PC-3 (cell line): ENCODE measurements at regions of chr6 and their contacts with region 1.

Region 1: DNA sequence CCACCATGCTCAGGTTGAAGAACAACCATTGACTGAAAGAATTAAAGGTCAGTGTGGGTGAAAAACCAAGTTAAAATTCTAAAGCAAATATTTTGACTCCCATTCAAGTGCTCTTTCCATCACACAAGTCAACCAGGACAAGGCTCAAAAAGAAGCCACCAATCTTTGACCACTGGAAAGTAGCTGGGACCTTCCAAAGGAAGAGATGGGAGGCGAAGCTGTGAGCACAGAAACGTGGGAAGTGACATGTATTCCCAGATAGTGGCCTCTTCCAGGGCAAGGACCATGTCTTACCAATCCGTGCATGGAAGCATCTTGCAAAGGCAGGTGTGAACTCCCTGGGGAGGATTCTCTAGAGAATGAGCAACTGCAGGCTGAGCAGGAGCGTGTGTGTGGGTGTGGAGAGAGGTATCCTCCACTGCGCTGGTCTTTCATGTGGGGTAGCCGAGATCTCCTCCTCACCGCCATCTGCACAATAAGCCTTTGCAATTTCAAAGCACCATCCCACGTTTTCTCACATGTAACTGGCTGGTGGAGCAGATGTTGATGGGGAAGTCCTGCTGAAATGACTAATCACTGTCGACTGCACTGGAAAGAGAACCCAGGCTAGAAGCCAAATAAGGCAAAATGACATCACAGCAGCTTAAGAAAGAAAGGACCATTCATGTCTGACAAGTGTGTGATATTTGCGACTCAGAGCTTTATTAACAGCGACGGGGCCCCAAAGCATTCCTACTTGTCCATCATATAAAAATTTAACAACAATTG is 189.4 kb upstream of the RREB1 start:
- DNase-seq: peak; percentile 75
- ATAC-seq: peak; percentile 45
- H3K4me3 ChIP-seq: no peak overlapping the region
- H3K27ac ChIP-seq: peak overlapping the region; percentile 73
- H3K4me1 ChIP-seq: peaks cover 42% of the 10 kb centered on the region
- H3K27me3 ChIP-seq: no peaks in the 10 kb centered on the region
- CTCF ChIP-seq: no peak

Region 2: GRCh38 chr6:6931071-6932025 is 12.9 kb after region 1 on chr6:
- CTCF ChIA-PET with region 1: no interaction called
- POLR2A ChIA-PET with region 1: no interaction called
- intact Hi-C with region 1: no loop called
- DNase-seq: no peak
- ATAC-seq: no peak
- H3K4me3 ChIP-seq: no peak overlapping the region
- H3K27ac ChIP-seq: no peak overlapping the region
- H3K4me1 ChIP-seq: no peaks in the 10 kb centered on the region
- H3K27me3 ChIP-seq: no peaks in the 10 kb centered on the region
- CTCF ChIP-seq: no peak

Region 3: DNA sequence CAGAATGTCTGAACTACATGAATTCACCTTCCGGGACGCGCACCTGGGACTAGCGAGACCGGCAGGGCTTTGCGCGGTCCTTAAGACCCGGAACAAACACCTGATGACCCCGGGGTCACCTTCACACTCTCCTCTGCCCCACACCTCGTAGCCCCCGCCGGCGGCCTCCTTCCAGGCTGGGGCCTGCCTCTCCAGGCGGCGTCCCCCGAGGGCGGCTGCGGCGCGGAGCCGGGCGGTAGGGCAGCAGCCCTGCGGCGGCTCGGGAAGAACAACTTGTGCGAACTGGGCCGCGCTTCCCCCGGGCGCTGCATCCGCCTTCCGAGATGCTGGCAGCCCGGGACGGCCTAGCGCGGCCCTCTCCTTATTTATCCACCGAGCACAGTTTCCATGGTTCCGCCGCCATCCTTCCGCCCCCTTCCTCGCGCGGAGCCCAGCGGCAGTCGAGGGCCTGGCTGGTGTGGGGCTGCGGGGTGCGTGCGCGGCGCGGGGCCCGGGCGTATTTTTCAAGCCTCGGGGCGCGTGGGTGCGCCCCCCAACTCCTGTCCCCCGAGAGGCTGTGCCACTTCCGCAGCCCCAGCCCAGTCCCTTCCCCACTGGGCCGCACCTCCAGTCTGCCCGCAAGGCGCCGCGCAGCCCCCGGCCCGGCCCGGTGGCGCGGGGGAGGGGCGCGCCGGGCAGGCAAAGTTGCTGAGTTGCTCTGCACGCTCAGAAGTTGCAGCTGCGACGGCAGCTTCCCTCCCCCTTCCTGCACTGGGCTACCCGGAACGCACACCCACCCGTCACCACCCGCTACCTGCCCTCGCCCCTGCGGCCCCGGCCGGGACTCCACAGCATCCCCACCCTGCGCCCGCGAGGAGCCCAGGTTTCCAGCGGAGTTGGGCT is 133.1 kb after region 1 on chr6:
- CTCF ChIA-PET with region 1: no interaction called
- POLR2A ChIA-PET with region 1: no interaction called
- intact Hi-C with region 1: loop called (anchors 2 kb)
- DNase-seq: peak; percentile 60
- ATAC-seq: peak; percentile 45
- H3K4me3 ChIP-seq: peak overlapping the region; percentile 79
- H3K27ac ChIP-seq: peak overlapping the region; percentile 96
- H3K4me1 ChIP-seq: peaks cover 50% of the 10 kb centered on the region
- H3K27me3 ChIP-seq: no peaks in the 10 kb centered on the region
- CTCF ChIP-seq: no peak

Region 4: GRCh38 chr6:7080311-7080710 is 161.9 kb after region 1 on chr6:
- CTCF ChIA-PET with region 1: no interaction called
- POLR2A ChIA-PET with region 1: no interaction called
- intact Hi-C with region 1: no loop called
- DNase-seq: no peak
- ATAC-seq: no peak
- H3K4me3 ChIP-seq: no peak overlapping the region
- H3K27ac ChIP-seq: no peak overlapping the region
- H3K4me1 ChIP-seq: no peaks in the 10 kb centered on the region
- H3K27me3 ChIP-seq: no peaks in the 10 kb centered on the region
- CTCF ChIP-seq: no peak

Region 5: GRCh38 chr6:7112741-7113313 is 194.4 kb after region 1 on chr6:
- CTCF ChIA-PET with region 1: no interaction called
- POLR2A ChIA-PET with region 1: no interaction called
- intact Hi-C with region 1: loop called (anchors 2 kb)
- DNase-seq: peak; percentile 88
- ATAC-seq: peak; percentile 80
- H3K4me3 ChIP-seq: peak overlapping the region; percentile 97
- H3K27ac ChIP-seq: peak overlapping the region; percentile 90
- H3K4me1 ChIP-seq: peaks cover 38% of the 10 kb centered on the region
- H3K27me3 ChIP-seq: no peaks in the 10 kb centered on the region
- CTCF ChIP-seq: no peak